OCI-LY7 (cell line): ENCODE measurements at regions of chr6 and their contacts with region 1.

Region 1: DNA sequence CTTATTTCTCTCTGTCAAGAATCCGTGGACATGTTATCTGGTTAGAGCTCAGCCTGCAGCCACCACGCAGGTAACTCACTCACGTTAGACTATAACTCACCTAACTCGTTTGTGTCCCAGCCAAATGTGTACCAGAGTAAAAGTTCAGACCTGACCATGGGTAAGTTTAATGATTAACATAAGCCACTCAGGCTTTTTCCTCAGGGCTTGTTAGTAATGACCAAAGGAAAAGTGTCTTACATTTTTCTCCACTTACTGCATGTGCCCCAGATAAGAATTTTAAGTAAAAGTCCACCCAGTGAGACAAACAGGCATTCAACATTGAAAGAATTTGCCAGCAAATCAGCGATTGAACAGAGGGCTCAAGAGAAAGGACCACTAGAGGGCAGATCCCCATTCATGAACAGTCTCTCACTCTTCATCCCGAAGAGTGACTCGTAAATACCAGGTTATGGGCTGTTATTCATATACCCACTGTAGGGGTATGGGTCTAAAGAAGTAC is at the start of gene PKHD1:
- DNase-seq: peak; percentile 4
- H3K4me3 ChIP-seq: no peak within 1 kb of the TSS
- H3K27ac ChIP-seq: no peak within 1 kb of the TSS
- H3K4me1 ChIP-seq: no peaks in the 10 kb centered on the region
- CTCF ChIP-seq: peak; percentile 68
- total RNA-seq, gene PKHD1: not detected in 2 replicates

Region 2: DNA sequence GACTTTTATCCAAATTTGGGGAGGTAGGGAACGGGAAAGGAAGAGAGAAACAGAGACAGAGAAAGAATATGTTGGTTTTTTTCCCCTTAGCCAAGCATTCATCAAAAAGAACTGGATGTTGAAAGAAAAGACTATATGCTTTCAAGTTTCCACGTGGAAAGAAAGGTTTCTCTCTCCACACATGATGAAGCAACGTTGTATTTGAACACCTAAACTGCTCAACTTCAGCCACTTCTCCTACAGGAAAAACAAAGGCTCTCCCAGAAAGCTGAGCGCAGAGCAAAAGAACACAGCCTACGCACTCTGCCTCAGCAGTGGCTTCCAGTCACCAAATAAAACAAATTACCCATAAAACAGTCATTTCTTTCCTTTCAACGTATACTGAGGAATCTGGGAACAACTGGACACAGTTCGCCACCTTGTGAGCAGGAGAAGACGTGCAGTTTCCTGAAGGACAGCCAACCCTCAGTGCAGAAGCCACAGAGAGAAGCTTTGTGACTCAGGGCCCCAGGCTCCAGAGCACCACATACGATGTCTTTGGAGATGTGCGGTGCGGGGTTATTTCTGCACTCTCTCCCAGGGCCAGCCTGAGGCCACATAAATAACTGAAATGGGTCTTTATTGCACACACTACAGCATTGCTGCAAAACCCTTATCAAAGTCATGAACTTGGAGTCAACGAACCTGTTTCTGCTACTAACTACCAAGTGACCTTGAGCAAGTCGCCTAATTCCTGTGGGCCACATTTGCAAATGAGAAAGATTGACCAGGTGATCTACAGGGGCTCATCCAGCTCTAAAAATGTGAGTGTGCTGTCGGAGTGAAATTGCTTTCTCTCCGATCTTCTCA is 146.7 kb after region 1 on chr6:
- CTCF ChIA-PET with region 1: no interaction called
- POLR2A ChIA-PET with region 1: no interaction called
- intact Hi-C with region 1: loop called (anchors 5 kb)
- DNase-seq: peak; percentile 28
- H3K4me3 ChIP-seq: no peak overlapping the region
- H3K27ac ChIP-seq: no peak overlapping the region
- H3K4me1 ChIP-seq: no peaks in the 10 kb centered on the region
- CTCF ChIP-seq: peak; percentile 73